ENCODE measurements at regions of chr4 and their contacts with region 1.

Region 1: DNA sequence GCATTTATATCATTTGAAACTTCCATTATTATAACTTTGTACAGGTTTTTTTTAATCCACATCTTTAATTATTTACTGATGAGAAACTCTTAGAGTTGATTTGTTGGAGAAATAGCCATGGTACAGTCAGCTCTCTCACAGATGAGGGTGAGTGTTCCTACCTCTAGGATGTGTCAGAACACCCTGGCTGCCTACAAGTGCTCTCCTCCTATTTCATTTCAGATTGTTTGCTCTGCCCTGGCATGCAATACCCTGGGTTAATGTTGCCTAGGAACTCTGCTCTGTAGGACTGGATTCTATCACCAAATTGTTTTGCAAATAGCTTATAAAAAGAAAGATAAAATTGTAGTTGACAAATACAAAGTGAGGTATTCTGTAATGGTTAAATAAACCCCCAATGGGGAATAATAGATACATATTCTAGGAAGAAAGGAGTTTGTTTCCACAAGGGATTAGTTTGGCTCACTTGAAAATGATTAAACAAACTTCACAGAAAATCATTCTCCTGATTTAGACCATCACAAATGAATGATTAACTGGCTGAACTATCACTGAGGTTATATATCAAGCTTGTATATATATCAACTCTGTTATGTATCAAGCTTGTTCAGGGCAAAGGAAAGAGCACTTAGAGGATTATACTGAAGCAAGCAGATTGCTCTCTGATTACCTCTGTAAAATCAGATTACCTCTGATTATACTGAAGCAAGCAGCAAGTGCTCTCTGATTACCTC is 150.0 kb downstream of the PDE5A start:
- DNase-seq: no peak
- H3K4me3 Mint-ChIP-seq: no peak overlapping the region
- H3K27ac Mint-ChIP-seq: no peak overlapping the region
- H3K4me1 Mint-ChIP-seq: no peaks in the 10 kb centered on the region
- H3K27me3 Mint-ChIP-seq: no peaks in the 10 kb centered on the region

Region 2: DNA sequence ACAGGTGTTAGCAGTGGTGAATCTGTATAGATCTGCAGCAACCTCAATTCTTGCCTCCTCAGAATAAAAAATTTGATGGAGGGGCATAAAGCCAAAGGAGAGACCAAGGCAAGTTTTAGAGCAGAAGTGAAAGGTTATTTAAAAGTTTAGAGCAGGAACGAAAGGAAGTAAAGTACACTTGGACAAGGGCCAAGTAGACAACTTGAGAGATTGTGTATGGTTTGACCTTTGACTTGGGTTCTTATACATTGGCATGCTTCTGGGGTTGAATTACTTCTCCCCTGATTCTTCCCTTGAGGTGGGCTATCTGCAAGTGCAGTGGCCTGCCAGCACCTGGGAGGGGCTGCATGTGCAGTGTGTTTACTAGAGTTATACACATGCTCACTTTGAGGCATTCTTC is 1723.2 kb before region 1 on chr4:
- CTCF ChIA-PET with region 1: no interaction called
- POLR2A ChIA-PET with region 1: no interaction called
- DNase-seq: no peak
- H3K4me3 Mint-ChIP-seq: no peak overlapping the region
- H3K27ac Mint-ChIP-seq: no peak overlapping the region
- H3K4me1 Mint-ChIP-seq: no peaks in the 10 kb centered on the region
- H3K27me3 Mint-ChIP-seq: no peaks in the 10 kb centered on the region

Region 3: DNA sequence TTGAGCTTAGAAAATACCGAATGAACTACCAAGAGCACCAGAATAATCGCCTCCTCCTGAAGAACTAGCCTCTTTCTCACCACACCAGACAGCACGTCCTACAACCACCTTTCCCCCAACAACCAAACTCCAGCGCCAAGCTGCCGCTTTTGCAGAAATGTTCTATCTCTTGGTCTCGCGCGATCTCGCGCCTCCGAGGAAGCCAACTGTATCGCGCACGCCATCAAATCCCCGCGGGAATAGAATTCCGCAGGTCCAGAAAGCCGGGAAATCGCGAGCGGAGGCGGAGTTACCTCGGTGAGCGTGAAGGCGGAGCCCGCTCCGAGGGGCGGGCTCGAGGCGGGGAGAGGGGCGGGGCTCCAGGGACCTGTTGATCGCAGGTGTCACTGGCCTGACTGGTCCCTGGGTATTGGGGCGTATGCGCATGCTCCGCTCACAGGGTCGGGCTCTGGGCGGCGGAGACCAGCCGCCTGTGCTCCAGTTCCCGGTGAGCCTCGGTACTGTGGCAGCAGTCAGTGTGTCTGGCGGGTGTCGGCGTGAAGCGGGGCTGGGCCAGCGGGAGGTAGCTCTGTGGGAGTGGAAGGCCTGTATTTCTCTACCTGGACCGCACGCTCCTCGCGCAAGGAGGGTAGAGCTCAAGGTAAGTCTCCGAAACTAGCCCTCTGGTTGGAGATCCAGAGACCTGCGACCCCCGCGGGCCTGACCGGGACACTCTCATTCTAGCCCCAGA is 266.2 kb before region 1 on chr4 and contains the start of gene USP53:
- CTCF ChIA-PET with region 1: no interaction called
- POLR2A ChIA-PET with region 1: interaction called, 11 read pairs
- DNase-seq: peak; percentile 97
- H3K4me3 Mint-ChIP-seq: peak within 1 kb of the TSS; percentile 91
- H3K27ac Mint-ChIP-seq: peak within 1 kb of the TSS; percentile 89
- H3K4me1 Mint-ChIP-seq: peaks cover 34% of the 10 kb centered on the region
- H3K27me3 Mint-ChIP-seq: peaks cover 3% of the 10 kb centered on the region
- total RNA-seq, gene USP53: 6.7 to 6.9 TPM